ENCODE measurements at regions of chr1 and their contacts with region 1.

Region 1: DNA sequence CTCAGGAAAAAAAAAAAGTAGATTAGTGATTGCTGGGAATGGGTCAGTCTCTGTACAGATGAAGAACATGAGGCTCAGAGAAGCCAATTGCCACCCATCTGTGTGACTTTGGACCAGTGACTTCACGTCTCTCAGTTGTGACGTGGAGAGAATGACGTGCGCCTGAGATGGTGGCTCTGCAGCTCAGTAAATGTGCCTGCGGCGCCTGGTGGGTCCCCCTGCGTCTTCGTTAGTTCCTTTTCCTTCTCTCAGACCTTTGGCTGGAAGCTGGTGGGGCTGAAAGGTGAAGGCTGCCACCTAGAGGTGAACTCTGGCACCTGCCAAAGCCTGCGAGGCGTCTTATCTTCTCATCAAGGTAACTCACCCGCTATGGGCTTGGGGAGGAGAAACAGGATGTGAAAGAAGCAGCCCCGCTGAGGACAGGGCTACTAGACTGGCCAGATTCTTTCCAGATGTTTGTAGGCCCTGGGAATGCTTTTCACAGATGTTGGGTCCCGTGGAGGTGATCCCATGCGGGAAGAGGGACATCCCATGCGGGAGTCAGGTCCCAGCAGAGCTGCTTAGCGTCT is 8.7 kb upstream of the E2F2 start:
- DNase-seq: peak; percentile 96
- H3K4me3 Mint-ChIP-seq: peak overlapping the region; percentile 37
- H3K27ac Mint-ChIP-seq: peak overlapping the region; percentile 82
- H3K4me1 Mint-ChIP-seq: peaks cover 31% of the 10 kb centered on the region
- H3K27me3 Mint-ChIP-seq: no peaks in the 10 kb centered on the region

Region 2: GRCh38 chr1:23384302-23385058 is 155.3 kb before region 1 on chr1:
- CTCF ChIA-PET with region 1: no interaction called
- POLR2A ChIA-PET with region 1: no interaction called
- DNase-seq: no peak
- H3K4me3 Mint-ChIP-seq: no peak overlapping the region
- H3K27ac Mint-ChIP-seq: no peak overlapping the region
- H3K4me1 Mint-ChIP-seq: no peaks in the 10 kb centered on the region
- H3K27me3 Mint-ChIP-seq: no peaks in the 10 kb centered on the region

Region 3: DNA sequence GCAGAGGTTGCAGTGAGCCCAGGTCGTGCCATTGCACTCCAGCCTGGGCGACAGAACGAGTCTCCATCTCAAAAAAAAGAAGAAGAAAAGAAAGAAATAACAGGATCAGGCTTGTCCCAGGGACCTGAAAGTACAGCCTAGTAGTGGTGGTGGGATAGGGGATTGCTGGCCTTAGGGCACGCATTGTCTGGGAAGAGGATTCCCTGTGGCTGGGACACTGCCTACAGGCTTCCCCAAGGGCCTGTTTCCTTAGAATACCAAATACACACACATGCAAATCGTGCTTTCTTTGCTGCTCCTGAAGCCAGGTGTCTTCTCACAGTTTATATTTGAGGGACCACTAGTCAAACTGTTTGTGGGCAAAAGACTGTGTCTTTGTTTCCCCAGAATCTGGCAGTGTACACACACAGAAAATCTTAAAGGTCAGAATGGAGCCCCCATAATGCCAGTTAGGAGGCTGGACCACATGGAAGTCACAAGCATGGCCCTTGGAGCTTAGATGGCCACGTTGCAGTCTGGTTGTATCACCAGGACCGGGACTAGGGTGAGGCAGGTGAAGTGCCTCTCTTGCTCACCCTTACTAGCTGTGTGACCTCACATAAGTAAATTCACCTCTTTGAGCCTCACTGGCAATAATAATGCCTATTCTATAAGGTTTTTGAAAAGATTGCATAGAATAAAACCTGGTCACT is 43.1 kb before region 1 on chr1:
- CTCF ChIA-PET with region 1: interaction called, 123 read pairs
- POLR2A ChIA-PET with region 1: interaction called, 4 read pairs
- DNase-seq: no peak
- H3K4me3 Mint-ChIP-seq: no peak overlapping the region
- H3K27ac Mint-ChIP-seq: no peak overlapping the region
- H3K4me1 Mint-ChIP-seq: peaks cover 8% of the 10 kb centered on the region
- H3K27me3 Mint-ChIP-seq: peaks cover 3% of the 10 kb centered on the region

Region 4: GRCh38 chr1:23514111-23514679 is 25.6 kb before region 1 on chr1:
- CTCF ChIA-PET with region 1: interaction called, 16 read pairs
- POLR2A ChIA-PET with region 1: no interaction called
- DNase-seq: no peak
- H3K4me3 Mint-ChIP-seq: no peak overlapping the region
- H3K27ac Mint-ChIP-seq: peak overlapping the region; percentile 58
- H3K4me1 Mint-ChIP-seq: peaks cover 5% of the 10 kb centered on the region
- H3K27me3 Mint-ChIP-seq: no peaks in the 10 kb centered on the region

Region 5: GRCh38 chr1:23559136-23559984 is 19.6 kb after region 1 on chr1 and contains the start of gene ID3:
- CTCF ChIA-PET with region 1: interaction called, 13 read pairs
- POLR2A ChIA-PET with region 1: no interaction called
- DNase-seq: peak; percentile 96
- H3K4me3 Mint-ChIP-seq: peak within 1 kb of the TSS; percentile 84
- H3K27ac Mint-ChIP-seq: peak within 1 kb of the TSS; percentile 93
- H3K4me1 Mint-ChIP-seq: peaks cover 76% of the 10 kb centered on the region
- H3K27me3 Mint-ChIP-seq: peaks cover 33% of the 10 kb centered on the region
- total RNA-seq, gene ID3: 62.7 to 65.2 TPM

Region 6: GRCh38 chr1:23619299-23620188 is 79.8 kb after region 1 on chr1:
- CTCF ChIA-PET with region 1: interaction called, 11 read pairs
- POLR2A ChIA-PET with region 1: no interaction called
- DNase-seq: peak; percentile 76
- H3K4me3 Mint-ChIP-seq: peak overlapping the region; percentile 68
- H3K27ac Mint-ChIP-seq: peak overlapping the region; percentile 94
- H3K4me1 Mint-ChIP-seq: peaks cover 88% of the 10 kb centered on the region
- H3K27me3 Mint-ChIP-seq: no peaks in the 10 kb centered on the region

Region 7: GRCh38 chr1:23627069-23627735 is 87.4 kb after region 1 on chr1:
- CTCF ChIA-PET with region 1: interaction called, 11 read pairs
- POLR2A ChIA-PET with region 1: no interaction called
- DNase-seq: peak; percentile 43
- H3K4me3 Mint-ChIP-seq: peak overlapping the region; percentile 78
- H3K27ac Mint-ChIP-seq: peak overlapping the region; percentile 83
- H3K4me1 Mint-ChIP-seq: peaks cover 57% of the 10 kb centered on the region
- H3K27me3 Mint-ChIP-seq: no peaks in the 10 kb centered on the region

Region 8: GRCh38 chr1:23704834-23705495 is 165.2 kb after region 1 on chr1:
- CTCF ChIA-PET with region 1: no interaction called
- POLR2A ChIA-PET with region 1: no interaction called
- DNase-seq: no peak
- H3K4me3 Mint-ChIP-seq: no peak overlapping the region
- H3K27ac Mint-ChIP-seq: no peak overlapping the region
- H3K4me1 Mint-ChIP-seq: peaks cover 2% of the 10 kb centered on the region
- H3K27me3 Mint-ChIP-seq: no peaks in the 10 kb centered on the region